Activated B cell treated with CpG ODN at 0.5 μM for 24 hours (primary cell): ENCODE measurements at regions of chr11 and their contacts with region 1.

Region 1: GRCh38 chr11:44977476-44977984 is 26.8 kb upstream of the TP53I11 start:
- DNase-seq: no peak
- ATAC-seq: no peak
- H3K4me3 Mint-ChIP-seq: peak overlapping the region; percentile 13
- H3K27ac Mint-ChIP-seq: no peak overlapping the region
- H3K4me1 Mint-ChIP-seq: peaks cover 21% of the 10 kb centered on the region
- H3K27me3 Mint-ChIP-seq: no peaks in the 10 kb centered on the region
- CTCF ChIP-seq: no peak

Region 2: DNA sequence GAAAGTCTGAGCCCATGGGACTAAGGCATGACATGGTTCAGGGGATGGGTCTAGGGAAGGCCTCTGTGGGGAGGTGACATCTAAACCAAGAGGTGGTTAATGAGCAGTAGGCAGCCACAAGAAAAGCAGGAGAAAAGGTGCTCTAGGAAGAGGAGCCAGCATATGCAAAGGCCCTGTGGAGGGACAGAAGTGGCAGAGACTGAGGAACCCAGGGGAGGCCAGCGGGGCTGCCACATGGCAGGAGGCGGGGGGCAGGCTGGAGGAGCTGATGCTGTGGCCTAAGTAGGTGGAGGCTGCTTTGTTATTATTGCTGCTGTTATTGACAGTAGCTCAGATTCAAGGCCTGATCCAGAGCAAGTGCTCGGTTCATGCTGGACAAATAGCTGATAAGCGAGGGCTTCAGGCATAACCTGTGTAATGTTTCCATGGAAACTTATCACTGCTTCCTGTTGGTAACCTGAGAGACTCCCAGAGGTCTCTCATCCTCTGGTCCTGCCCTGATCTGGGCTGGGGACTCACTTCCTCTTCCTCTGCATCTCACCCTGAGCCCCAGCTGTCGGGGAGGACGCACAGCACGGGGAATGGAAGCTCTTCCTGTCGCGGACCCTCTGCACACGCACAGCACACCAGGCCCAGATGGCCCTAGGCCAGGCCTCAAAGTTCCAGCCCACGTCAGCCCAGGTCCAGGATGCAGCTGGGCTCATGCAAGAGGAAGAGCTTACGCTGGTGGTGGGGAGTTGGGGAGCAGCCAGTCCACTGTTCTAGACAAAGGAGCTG is 48.4 kb after region 1 on chr11:
- CTCF ChIA-PET with region 1: no interaction called
- POLR2A ChIA-PET with region 1: interaction called, 3 read pairs
- intact Hi-C with region 1: loop called (anchors 5 kb)
- DNase-seq: peak; percentile 48
- ATAC-seq: peak; percentile 46
- H3K4me3 Mint-ChIP-seq: peak overlapping the region; percentile 54
- H3K27ac Mint-ChIP-seq: peak overlapping the region; percentile 93
- H3K4me1 Mint-ChIP-seq: peaks cover 65% of the 10 kb centered on the region
- H3K27me3 Mint-ChIP-seq: no peaks in the 10 kb centered on the region
- CTCF ChIP-seq: no peak

Region 3: GRCh38 chr11:45804761-45805304 is 827.3 kb after region 1 on chr11 and contains the start of gene SLC35C1:
- CTCF ChIA-PET with region 1: no interaction called
- POLR2A ChIA-PET with region 1: no interaction called
- intact Hi-C with region 1: no loop called
- DNase-seq: peak; percentile 95
- ATAC-seq: peak; percentile 96
- H3K4me3 Mint-ChIP-seq: peak within 1 kb of the TSS; percentile 92
- H3K27ac Mint-ChIP-seq: peak within 1 kb of the TSS; percentile 78
- H3K4me1 Mint-ChIP-seq: peaks cover 41% of the 10 kb centered on the region
- H3K27me3 Mint-ChIP-seq: no peaks in the 10 kb centered on the region
- CTCF ChIP-seq: no peak
- total RNA-seq, gene SLC35C1: 8.6 and 8.8 TPM in 2 replicates